Tibial artery (tissue), 4 donors: ENCODE measurements at regions of chr1 and their contacts with region 1.

Region 1: DNA sequence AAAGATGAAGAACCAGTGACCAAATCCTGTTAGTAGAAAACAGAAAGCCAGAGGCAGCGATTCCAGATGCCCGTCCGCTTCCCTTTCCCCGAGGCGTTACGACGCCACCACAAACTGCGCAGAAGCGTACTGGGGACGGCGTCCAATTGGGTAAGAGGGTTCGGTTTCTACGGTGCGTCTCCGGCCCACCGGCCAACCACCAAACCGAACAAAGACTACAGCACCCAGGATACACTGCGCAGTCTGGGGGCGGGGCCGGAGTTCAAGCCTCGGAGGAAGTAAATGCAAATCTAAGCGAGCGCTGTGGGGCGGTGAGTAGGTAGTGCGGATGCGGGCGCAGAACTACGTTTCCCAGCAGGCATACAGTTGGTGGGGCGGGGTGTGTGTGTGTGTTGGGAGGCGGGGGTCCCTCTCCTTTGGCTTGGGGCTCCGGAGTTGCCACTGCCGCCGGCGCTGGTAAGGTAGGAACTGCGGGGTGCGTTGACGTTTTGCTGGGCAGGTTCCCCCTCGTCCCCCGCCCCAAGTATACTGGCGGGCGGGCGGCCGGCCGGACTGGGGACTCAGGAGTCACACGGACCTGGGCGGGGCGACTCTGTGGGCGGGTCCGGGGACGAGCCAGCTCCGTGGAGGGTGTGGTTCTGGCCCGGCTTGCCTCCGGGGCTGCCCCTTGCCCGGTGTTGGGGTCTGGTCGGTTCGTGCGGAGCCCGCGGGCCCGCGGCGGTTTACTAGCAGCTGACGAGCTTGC is at the starts of genes SWT1 and TRMT1L:
- DNase-seq: peak; percentile 100
- H3K4me3 ChIP-seq: peak within 1 kb of the TSS; percentile 83 to 87
- H3K27ac ChIP-seq: peak within 1 kb of the TSS; percentile 99 to 100
- H3K4me1 ChIP-seq: peaks cover 0 to 47% (median 8%) of the 10 kb centered on the region in 4 donors
- H3K27me3 ChIP-seq: peaks cover 0 to 2% of the 10 kb centered on the region in 2 donors
- CTCF ChIP-seq: peak in 1 of 2 experiments; percentile 4

Region 2: DNA sequence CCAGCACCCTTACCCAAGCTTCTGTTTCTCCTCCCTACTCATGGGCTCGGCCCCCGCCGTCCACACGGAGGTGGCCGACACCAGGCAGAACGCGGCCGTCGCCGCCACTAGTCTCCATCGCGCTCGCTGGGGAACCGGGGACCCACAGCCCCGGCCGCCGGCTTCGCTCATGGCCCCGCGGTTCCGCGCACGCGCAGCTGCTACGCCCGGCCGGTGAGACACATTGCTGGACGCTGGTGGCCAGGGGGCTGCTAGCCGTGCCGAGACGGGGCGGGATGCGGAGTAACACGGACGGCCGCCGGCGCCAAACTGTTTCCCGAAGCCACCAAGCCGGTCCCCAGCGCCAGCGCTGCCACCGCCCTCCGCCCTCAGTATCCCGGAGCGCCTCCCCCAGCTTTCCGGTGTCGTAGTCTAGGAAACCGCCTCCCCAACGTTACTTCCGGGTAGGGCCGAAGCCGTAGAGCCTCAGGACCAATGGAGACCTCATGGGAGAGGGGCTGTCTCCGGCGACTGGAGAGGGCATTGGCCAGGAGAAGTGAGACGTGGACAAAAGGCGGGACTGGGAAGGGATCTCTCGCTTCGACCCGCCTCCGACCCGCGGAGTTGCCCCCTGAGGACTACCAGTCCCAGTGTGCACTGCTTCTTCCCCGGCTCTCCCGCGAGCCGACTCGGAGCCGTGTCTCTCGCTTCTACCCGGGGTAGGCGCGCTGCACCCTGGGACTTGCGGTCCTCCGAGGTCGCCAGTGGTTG is 402.4 kb before region 1 on chr1 and contains the start of gene EDEM3:
- intact Hi-C with region 1: loop called (anchors 10 kb)
- DNase-seq: peak; percentile 99
- H3K4me3 ChIP-seq: peak within 1 kb of the TSS; percentile 79 to 82
- H3K27ac ChIP-seq: peak within 1 kb of the TSS; percentile 85 to 91
- H3K4me1 ChIP-seq: peaks cover 0 to 21% (median 10%) of the 10 kb centered on the region in 4 donors
- H3K27me3 ChIP-seq: no peaks in the 10 kb centered on the region
- CTCF ChIP-seq: peak in 1 of 2 experiments; percentile 8

Region 3: GRCh38 chr1:185044981-185045813 is 111.8 kb before region 1 on chr1 and contains the start of gene RNF2:
- intact Hi-C with region 1: loop called (anchors 10 kb)
- DNase-seq: peak; percentile 75 to 86
- H3K4me3 ChIP-seq: peak within 1 kb of the TSS; percentile 86 to 87
- H3K27ac ChIP-seq: peak within 1 kb of the TSS; percentile 89 to 92
- H3K4me1 ChIP-seq: peaks cover 0 to 16% (median 13%) of the 10 kb centered on the region in 4 donors
- H3K27me3 ChIP-seq: no peaks in the 10 kb centered on the region
- CTCF ChIP-seq: no peak

Region 4: GRCh38 chr1:185074307-185074706 is 82.7 kb before region 1 on chr1:
- intact Hi-C with region 1: no loop called
- DNase-seq: no peak
- H3K4me3 ChIP-seq: no peak overlapping the region
- H3K27ac ChIP-seq: no peak overlapping the region
- H3K4me1 ChIP-seq: no peaks in the 10 kb centered on the region
- H3K27me3 ChIP-seq: no peaks in the 10 kb centered on the region
- CTCF ChIP-seq: no peak

Region 5: DNA sequence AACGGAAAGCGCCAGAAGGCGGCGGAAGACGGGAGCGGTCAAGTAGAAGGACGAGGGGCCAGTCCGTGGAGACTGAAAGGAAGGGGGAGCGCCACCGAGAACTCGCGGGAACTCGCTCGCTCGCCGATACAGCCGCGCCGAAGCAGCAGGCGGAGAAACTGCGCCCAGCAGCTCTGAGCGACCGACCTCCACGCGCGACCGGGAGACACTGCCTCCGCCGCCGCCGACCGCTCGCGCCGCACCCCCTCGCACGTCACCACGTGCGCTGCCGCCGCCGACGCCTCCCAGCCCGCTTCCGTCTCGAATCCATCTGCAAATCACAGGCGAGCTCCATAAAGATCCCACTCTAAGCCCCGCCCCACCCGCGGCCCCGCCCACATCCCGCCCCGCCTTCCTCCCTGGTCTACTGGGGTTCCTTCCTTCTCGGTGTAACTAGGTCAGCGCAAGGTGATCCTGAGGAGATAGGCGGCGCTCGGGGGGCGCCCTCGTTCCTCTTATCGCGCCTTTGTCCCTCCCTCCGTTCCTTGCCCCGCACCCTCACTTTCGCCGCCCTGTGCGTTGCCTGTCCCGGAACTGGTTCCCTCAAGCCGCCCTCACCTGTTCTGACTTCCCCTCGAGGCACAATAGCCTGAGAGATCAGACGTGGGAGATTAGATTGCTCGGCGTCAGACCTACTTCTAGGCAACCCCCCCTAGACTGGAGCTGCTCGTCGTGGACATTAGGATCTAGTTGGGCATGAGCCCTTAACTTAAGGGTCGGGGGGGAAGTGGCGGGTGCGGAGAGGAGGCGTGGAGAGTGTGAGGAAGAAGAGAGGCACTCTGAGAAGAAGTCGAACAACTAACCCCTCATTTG is 160.2 kb after region 1 on chr1 and contains the start of gene IVNS1ABP:
- intact Hi-C with region 1: loop called (anchors 2 kb)
- DNase-seq: peak; percentile 92 to 96
- H3K4me3 ChIP-seq: peak within 1 kb of the TSS; percentile 87 to 88
- H3K27ac ChIP-seq: peak within 1 kb of the TSS; percentile 93 to 98
- H3K4me1 ChIP-seq: peaks cover 0 to 34% (median 15%) of the 10 kb centered on the region in 4 donors
- H3K27me3 ChIP-seq: no peaks in the 10 kb centered on the region
- CTCF ChIP-seq: no peak